ENCODE measurements at regions of chr3 and their contacts with region 1.

Region 1: GRCh38 chr3:4978204-4978965 is 852 bp upstream of the BHLHE40 start:
- DNase-seq: peak; percentile 78
- ATAC-seq: peak; percentile 52
- H3K4me3 ChIP-seq: peak overlapping the region; percentile 72
- H3K27ac ChIP-seq: peak overlapping the region; percentile 84
- H3K4me1 ChIP-seq: peaks cover 27% of the 10 kb centered on the region
- H3K27me3 ChIP-seq: no peaks in the 10 kb centered on the region
- CTCF ChIP-seq: no peak
- EP300 ChIP-seq: peak; percentile 60 to 80; a peak in 3 of 4 replicates
- POLR2A ChIP-seq: peak; percentile 89
- RAD21 ChIP-seq: 0 out of 2 replicates have a peak, but pooled peaks have one; percentile 5

Region 2: DNA sequence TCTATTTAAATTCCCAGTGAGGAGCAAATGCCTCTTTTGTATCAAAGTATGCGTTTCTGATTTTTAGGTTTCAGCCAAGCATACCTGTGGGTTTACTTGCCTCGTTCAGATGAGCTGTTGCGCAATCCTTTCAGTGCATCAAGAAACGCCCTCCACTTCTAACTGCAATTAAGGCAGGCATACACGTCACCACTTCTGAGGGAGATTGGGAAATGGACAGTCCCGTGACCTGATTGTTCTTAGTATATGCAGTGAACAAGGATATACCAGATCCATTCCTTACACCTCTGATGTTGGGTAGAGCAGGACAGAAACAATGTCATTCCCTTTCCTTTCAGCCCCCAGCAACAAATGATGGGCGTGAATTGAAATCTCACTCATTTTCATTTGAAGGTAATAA is 266.2 kb before region 1 on chr3:
- CTCF ChIA-PET with region 1: interaction called, 81 read pairs
- POLR2A ChIA-PET with region 1: interaction called, 4 read pairs
- RAD21 ChIA-PET with region 1: interaction called, 52 read pairs
- SMC1A ChIA-PET with region 1: interaction called, 44 read pairs
- in situ Hi-C with region 1: loop called (anchors 5 kb)
- intact Hi-C with region 1: loop called (anchors 2 kb)
- DNase-seq: no peak
- ATAC-seq: no peak
- H3K4me3 ChIP-seq: no peak overlapping the region
- H3K27ac ChIP-seq: no peak overlapping the region
- H3K4me1 ChIP-seq: no peaks in the 10 kb centered on the region
- H3K27me3 ChIP-seq: no peaks in the 10 kb centered on the region
- CTCF ChIP-seq: no peak
- EP300 ChIP-seq: no peak
- POLR2A ChIP-seq: no peak
- RAD21 ChIP-seq: no peak

Region 3: GRCh38 chr3:4756855-4757574 is 221.4 kb before region 1 on chr3:
- CTCF ChIA-PET with region 1: interaction called, 35 read pairs
- POLR2A ChIA-PET with region 1: interaction called, 230 read pairs
- RAD21 ChIA-PET with region 1: interaction called, 342 read pairs
- SMC1A ChIA-PET with region 1: interaction called, 122 read pairs
- in situ Hi-C with region 1: loop called (anchors 5 kb)
- intact Hi-C with region 1: loop called (anchors 1 kb)
- DNase-seq: no peak
- ATAC-seq: peak; percentile 12
- H3K4me3 ChIP-seq: no peak overlapping the region
- H3K27ac ChIP-seq: peak overlapping the region; percentile 33
- H3K4me1 ChIP-seq: peaks cover 55% of the 10 kb centered on the region
- H3K27me3 ChIP-seq: no peaks in the 10 kb centered on the region
- CTCF ChIP-seq: no peak
- EP300 ChIP-seq: peak in 1 of 2 experiments; percentile 37; a peak in 2 of 4 replicates
- POLR2A ChIP-seq: no peak
- RAD21 ChIP-seq: no peak

Region 4: GRCh38 chr3:4834403-4834866 is 143.9 kb before region 1 on chr3:
- CTCF ChIA-PET with region 1: interaction called, 35 read pairs
- POLR2A ChIA-PET with region 1: interaction called, 10 read pairs
- RAD21 ChIA-PET with region 1: interaction called, 325 read pairs
- SMC1A ChIA-PET with region 1: interaction called, 129 read pairs
- in situ Hi-C with region 1: no loop called
- intact Hi-C with region 1: loop called (anchors 1 kb)
- DNase-seq: no peak
- ATAC-seq: peak; percentile 63
- H3K4me3 ChIP-seq: no peak overlapping the region
- H3K27ac ChIP-seq: peak overlapping the region; percentile 43; the same call in 1 of the 2 replicates
- H3K4me1 ChIP-seq: peaks cover 43% of the 10 kb centered on the region
- H3K27me3 ChIP-seq: no peaks in the 10 kb centered on the region
- CTCF ChIP-seq: no peak
- EP300 ChIP-seq: peak; percentile 89 to 95; a peak in 3 of 4 replicates
- POLR2A ChIP-seq: no peak
- RAD21 ChIP-seq: 0 out of 2 replicates have a peak, but pooled peaks have one; percentile 4

Region 5: DNA sequence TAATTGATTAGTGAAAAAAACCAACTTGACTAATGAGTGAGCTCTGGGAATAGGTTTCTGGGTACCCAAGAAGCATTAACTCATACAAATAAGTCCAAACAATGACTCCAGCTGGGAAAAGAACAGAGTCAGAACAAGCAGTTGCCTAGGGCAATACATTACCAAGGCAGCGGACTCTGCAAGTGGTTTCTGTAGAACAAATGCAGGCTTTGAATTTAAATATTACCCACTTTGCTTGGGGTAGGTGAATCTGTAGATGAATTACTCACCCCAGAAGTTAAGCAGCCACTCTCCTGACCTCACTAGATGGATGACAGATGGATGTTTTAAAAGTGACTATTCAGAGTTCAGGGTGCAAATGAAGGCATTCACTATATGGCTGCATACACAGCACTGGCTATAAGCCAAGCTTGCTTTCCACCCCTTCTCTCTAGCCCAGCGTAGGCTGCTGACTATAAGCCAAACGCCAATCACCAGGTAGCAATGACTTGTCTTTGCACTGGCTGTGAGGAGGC is 72.2 kb before region 1 on chr3:
- CTCF ChIA-PET with region 1: interaction called, 10 read pairs
- POLR2A ChIA-PET with region 1: no interaction called
- RAD21 ChIA-PET with region 1: interaction called, 26 read pairs
- SMC1A ChIA-PET with region 1: interaction called, 12 read pairs
- in situ Hi-C with region 1: no loop called
- intact Hi-C with region 1: no loop called
- DNase-seq: no peak
- ATAC-seq: peak; percentile 73
- H3K4me3 ChIP-seq: no peak overlapping the region
- H3K27ac ChIP-seq: no peak overlapping the region
- H3K4me1 ChIP-seq: peaks cover 22% of the 10 kb centered on the region
- H3K27me3 ChIP-seq: no peaks in the 10 kb centered on the region
- CTCF ChIP-seq: no peak
- EP300 ChIP-seq: no peak
- POLR2A ChIP-seq: no peak
- RAD21 ChIP-seq: no peak

Region 6: GRCh38 chr3:5026331-5027218 is 48.2 kb after region 1 on chr3:
- CTCF ChIA-PET with region 1: interaction called, 43 read pairs
- POLR2A ChIA-PET with region 1: interaction called, 94 read pairs
- RAD21 ChIA-PET with region 1: interaction called, 194 read pairs
- SMC1A ChIA-PET with region 1: interaction called, 163 read pairs
- in situ Hi-C with region 1: no loop called
- intact Hi-C with region 1: no loop called
- DNase-seq: no peak
- ATAC-seq: peak; percentile 83
- H3K4me3 ChIP-seq: peak overlapping the region; percentile 61; the same call in 1 of the 2 replicates
- H3K27ac ChIP-seq: peak overlapping the region; percentile 68
- H3K4me1 ChIP-seq: peaks cover 31% of the 10 kb centered on the region
- H3K27me3 ChIP-seq: no peaks in the 10 kb centered on the region
- CTCF ChIP-seq: peak; percentile 63 to 72 (median 71)
- EP300 ChIP-seq: no peak; a peak in 1 of 4 replicates
- POLR2A ChIP-seq: 0 out of 2 replicates have a peak, but pooled peaks have one; percentile 31
- RAD21 ChIP-seq: peak; percentile 86

Region 7: GRCh38 chr3:6047016-6047415 is 1068.6 kb after region 1 on chr3:
- CTCF ChIA-PET with region 1: no interaction called
- POLR2A ChIA-PET with region 1: no interaction called
- RAD21 ChIA-PET with region 1: no interaction called
- SMC1A ChIA-PET with region 1: no interaction called
- in situ Hi-C with region 1: no loop called
- intact Hi-C with region 1: no loop called
- DNase-seq: no peak
- ATAC-seq: no peak
- H3K4me3 ChIP-seq: no peak overlapping the region
- H3K27ac ChIP-seq: no peak overlapping the region
- H3K4me1 ChIP-seq: no peaks in the 10 kb centered on the region
- H3K27me3 ChIP-seq: no peaks in the 10 kb centered on the region
- CTCF ChIP-seq: no peak
- EP300 ChIP-seq: no peak
- POLR2A ChIP-seq: no peak
- RAD21 ChIP-seq: no peak